ENCODE measurements at regions of chr5 and their contacts with region 1.

Region 1: GRCh38 chr5:67268231-67269021 is 71.8 kb upstream of the CD180 start:
- DNase-seq: peak; percentile 95
- H3K4me3 ChIP-seq: peak overlapping the region in 2 of 4 donors; percentile 13 to 14
- H3K27ac ChIP-seq: peak overlapping the region; percentile 91 to 94 (median 92)
- H3K4me1 ChIP-seq: peaks cover 0 to 89% (median 80%) of the 10 kb centered on the region in 4 donors
- H3K27me3 ChIP-seq: no peaks in the 10 kb centered on the region
- CTCF ChIP-seq: no peak
- EP300 ChIP-seq: peak; percentile 94 to 99 (median 96)
- POLR2A ChIP-seq: no peak

Region 2: DNA sequence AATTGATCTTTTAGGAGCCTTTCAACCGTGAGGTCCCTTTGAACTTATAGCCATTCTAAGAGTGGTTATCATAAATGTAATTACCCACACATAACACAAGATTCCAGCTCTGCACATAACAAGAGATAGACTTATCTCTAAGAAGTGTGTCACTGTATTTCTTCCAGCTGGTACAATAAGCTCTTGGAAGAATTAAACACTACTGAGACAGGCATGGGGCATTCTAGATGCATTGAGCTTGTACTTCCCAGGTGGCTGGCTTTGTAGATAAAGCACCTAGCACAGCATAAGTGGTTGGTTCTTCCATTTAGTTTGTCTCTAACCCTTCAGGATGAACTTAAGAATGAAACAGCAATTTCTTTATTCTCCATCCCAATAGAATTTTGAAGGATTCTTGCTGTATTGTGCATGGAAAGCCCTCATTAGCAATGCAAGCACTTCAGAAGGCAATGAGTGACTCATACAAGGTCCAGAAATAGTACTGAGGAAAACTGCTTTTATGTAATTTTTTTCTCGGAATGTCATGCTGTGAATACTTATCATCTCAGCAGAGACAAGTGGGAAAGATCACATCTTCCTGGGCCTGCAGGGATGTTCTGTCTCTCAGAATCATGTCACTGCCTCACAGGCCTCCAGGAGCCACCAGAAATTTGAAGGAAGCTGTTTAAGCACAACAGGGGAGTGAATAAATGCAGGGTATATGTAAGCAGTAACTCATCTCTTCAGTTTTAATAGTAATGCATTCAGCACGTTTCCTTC is 19.3 kb after region 1 on chr5:
- intact Hi-C with region 1: loop called (anchors 2 kb)
- DNase-seq: no peak
- H3K4me3 ChIP-seq: no peak overlapping the region
- H3K27ac ChIP-seq: peak overlapping the region; percentile 25 to 77 (median 72)
- H3K4me1 ChIP-seq: peaks cover 0 to 59% (median 55%) of the 10 kb centered on the region in 4 donors
- H3K27me3 ChIP-seq: no peaks in the 10 kb centered on the region
- CTCF ChIP-seq: no peak
- EP300 ChIP-seq: no peak
- POLR2A ChIP-seq: no peak

Measured in sigmoid colon (tissue), 7 donors.